ENCODE measurements at regions of chr9 and their contacts with region 1.

Region 1: GRCh38 chr9:70587201-70587600 is 172.7 kb upstream of the KLF9 start:
- DNase-seq: peak; percentile 87
- H3K4me3 ChIP-seq: no peak overlapping the region
- H3K27ac ChIP-seq: peak overlapping the region; percentile 76
- H3K4me1 ChIP-seq: peaks cover 50% of the 10 kb centered on the region
- H3K27me3 ChIP-seq: no peaks in the 10 kb centered on the region

Region 2: GRCh38 chr9:69971643-69972449 is 615.4 kb before region 1 on chr9:
- in situ Hi-C with region 1: loop called (anchors 25 kb)
- DNase-seq: peak; percentile 83
- H3K4me3 ChIP-seq: peak overlapping the region; percentile 55
- H3K27ac ChIP-seq: peak overlapping the region; percentile 60
- H3K4me1 ChIP-seq: peaks cover 34% of the 10 kb centered on the region
- H3K27me3 ChIP-seq: no peaks in the 10 kb centered on the region

Region 3: GRCh38 chr9:70413798-70414775 is 173.1 kb before region 1 on chr9 and contains the start of gene KLF9:
- in situ Hi-C with region 1: loop called (anchors 10 kb)
- DNase-seq: peak; percentile 98
- H3K4me3 ChIP-seq: peak within 1 kb of the TSS; percentile 95
- H3K27ac ChIP-seq: peak within 1 kb of the TSS; percentile 100
- H3K4me1 ChIP-seq: peaks cover 33% of the 10 kb centered on the region
- H3K27me3 ChIP-seq: no peaks in the 10 kb centered on the region
- total RNA-seq, gene KLF9: 14.3 and 14.5 TPM in 2 replicates

Region 4: GRCh38 chr9:70504834-70505233 is 82.4 kb before region 1 on chr9:
- in situ Hi-C with region 1: loop called (anchors 10 kb)
- DNase-seq: no peak
- H3K4me3 ChIP-seq: no peak overlapping the region
- H3K27ac ChIP-seq: no peak overlapping the region
- H3K4me1 ChIP-seq: no peaks in the 10 kb centered on the region
- H3K27me3 ChIP-seq: no peaks in the 10 kb centered on the region